Left cardiac atrium (tissue), 4 donors: ENCODE measurements at regions of chr2 and their contacts with region 1.

Region 1: DNA sequence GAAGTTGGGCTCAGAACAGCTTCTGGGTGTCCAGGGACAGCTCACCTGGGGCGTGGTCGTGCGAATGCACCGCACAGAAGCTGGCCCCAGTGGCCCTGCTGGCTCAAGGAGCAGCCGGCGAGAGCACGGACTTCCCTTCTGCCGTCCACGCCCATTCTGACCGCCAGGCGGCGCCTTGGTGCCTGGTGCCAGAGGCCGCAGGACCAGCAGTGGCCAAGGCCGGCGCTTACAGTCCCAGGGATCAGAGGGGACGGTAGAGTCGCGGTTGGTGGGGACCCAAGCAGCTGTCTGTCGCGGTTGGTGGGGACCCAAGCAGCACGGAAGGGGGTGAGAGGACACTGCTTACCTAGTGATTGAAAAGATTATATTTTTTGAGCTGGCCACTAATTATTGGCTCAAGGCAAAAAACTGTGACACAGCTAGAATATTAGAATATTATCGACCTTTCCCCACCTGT is 25.7 kb downstream of the NPPC start:
- DNase-seq: peak; percentile 75
- ATAC-seq: peak; percentile 44 to 82

Region 2: GRCh38 chr2:231780909-231781797 is 119.4 kb before region 1 on chr2 and contains the start of gene PDE6D:
- intact Hi-C with region 1: no loop called
- DNase-seq: peak; percentile 97
- ATAC-seq: peak; percentile 97 to 98
- total RNA-seq, gene PDE6D: 16.6 to 18.8 TPM

Region 3: DNA sequence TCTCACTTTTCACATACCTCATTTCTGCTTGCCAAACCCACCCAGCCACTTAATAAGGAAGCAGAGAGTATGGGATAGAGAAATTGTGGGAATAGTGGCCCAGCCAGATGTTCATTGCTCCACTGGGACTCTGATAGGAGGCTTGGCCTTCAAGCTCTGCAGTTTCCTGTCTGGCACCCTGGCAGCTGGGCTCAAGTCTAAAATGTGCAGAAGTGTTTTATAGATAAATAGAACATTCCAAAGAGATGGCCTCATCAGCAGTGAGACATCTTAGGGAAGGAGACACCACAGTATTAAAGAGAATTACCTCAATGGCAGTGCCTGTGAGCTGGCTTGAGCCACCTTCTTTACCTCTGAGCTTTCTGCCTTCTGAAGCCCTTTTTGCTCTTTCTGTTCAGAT is 89.6 kb before region 1 on chr2:
- intact Hi-C with region 1: no loop called
- DNase-seq: no peak
- ATAC-seq: peak in 1 of 2 donors; percentile 58

Region 4: GRCh38 chr2:232142049-232142448 is 241.5 kb after region 1 on chr2:
- intact Hi-C with region 1: loop called in 1 of 2 experiments (anchors 5 kb)
- DNase-seq: peak; percentile 25
- ATAC-seq: peak; percentile 44 to 67

Region 5: DNA sequence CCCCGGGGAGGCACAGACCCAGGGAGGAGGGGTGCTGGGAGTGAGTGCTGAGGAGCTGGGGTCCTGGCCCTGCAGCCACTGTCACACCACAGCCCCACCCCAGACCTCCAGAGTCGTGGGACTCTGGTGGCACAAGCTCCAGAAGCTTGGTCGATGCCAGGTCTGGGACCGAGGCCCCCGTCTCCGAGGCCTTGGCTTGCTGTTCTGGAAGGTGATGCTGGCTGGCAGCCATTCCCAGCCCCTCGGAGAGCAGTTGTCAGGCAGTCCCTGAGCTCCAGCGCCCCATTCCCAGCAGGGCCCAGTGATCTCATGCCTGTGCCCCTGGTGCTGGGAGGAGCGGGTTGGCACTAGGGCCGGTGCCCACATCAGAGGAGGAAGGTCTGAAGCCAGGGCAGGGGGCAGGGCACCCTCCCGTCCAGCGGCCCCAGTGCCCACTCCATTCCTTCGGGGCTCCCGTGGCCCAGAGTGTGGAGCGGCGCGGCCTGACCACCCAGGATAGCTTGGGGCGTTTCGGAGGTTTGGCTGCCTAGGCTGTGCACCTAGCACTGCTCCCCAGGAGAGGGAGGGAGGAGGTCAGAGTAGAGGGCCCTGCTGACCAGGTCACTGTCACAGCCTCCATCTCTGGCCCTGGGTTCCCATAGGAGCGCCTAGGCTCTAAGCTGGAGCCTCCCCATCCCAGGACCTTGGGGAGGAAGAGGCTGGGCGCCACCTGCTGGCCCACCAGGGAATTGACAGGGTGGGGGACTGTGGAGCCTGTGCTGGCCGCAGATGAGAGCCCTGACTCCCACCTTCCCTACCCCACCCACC is 538.6 kb after region 1 on chr2:
- intact Hi-C with region 1: loop called (anchors 2 to 5 kb)
- DNase-seq: no peak
- ATAC-seq: peak; percentile 58 to 59

Region 6: DNA sequence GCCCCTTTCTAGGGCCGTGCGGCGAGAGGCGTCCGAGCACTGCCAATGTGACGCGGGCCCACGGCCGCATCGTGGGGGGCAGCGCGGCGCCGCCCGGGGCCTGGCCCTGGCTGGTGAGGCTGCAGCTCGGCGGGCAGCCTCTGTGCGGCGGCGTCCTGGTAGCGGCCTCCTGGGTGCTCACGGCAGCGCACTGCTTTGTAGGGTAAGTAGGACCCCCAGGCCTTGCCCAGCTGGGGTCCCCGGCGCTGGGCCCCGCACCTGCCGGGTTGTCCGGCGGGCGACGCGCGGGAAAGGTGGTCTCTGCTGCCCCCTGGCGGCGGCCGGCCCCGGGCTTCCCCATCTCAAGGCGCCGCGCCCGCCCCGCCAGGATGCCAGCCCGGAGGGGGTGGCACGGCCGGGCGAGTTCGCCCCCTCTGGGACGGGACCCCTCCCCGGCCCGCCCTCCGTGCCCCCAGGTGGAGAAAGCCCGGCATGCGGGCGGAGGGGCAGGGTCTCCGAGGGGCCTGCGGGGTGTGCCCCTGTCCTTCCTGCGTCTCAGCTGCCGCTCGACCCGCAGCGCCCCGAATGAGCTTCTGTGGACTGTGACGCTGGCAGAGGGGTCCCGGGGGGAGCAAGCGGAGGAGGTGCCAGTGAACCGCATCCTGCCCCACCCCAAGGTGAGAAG is 621.6 kb after region 1 on chr2:
- intact Hi-C with region 1: loop called (anchors 5 to 10 kb)
- DNase-seq: peak; percentile 63
- ATAC-seq: peak; percentile 45 to 57

Region 7: GRCh38 chr2:233711312-233712008 is 1810.9 kb after region 1 on chr2:
- intact Hi-C with region 1: no loop called
- DNase-seq: peak; percentile 78
- ATAC-seq: peak; percentile 78 to 90